ENCODE measurements at regions of chr3 and their contacts with region 1.

Region 1: GRCh38 chr3:62188681-62189383 is 184.5 kb downstream of the FEZF2 start:
- DNase-seq: peak; percentile 68 to 74
- ATAC-seq: peak; percentile 27 to 83 (median 72)
- H3K4me3 ChIP-seq: peak overlapping the region in 3 of 10 donors; percentile 12 to 39 (median 18)
- H3K27ac ChIP-seq: peak overlapping the region in 1 of 10 donors; percentile 10
- H3K4me1 ChIP-seq: peaks cover 0 to 27% (median 21%) of the 10 kb centered on the region in 9 donors
- H3K27me3 ChIP-seq: no peaks in the 10 kb centered on the region
- CTCF ChIP-seq: peak; percentile 60 to 88 (median 83)

Region 2: DNA sequence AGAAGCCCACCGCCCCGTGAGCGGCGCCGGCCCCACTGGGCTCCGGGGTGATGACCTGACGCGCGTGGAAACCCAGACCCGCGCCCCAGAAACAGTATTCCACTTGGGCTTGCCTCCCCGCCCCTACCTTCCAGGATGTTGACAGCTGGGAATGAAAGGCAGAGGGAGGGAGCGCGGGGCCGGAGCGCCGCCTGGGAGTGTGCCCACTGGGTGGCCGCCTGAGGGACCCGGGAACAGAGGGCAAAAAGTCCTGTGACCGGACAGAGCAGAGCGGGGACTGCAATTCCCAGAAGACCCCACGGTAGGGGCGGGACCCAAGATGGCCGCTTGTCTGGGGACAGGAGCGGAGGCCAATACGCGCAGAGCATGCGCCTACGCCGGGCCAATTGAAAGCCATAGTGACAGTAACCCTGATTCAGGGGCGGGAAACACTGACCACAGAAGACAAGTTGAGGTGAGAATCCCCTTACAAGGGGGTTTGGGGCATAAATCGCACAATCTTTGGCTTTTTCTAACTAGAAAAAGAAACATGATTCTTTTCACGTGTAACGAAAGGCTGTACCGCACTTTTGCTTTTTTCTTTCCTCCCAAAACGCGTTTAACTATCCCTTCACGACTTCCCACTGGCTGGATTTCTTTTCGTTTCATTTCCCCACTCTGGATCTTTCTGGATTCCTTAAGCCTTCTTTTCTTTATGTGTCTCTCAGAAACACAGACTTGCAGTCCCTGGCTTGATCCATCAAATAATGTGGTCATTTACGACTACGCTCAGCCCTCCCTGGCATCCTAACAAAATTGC is 937.5 kb before region 1 on chr3 and contains the start of gene FHIT:
- intact Hi-C with region 1: loop called in 1 of 10 experiments (anchors 10 kb)
- DNase-seq: peak; percentile 95
- ATAC-seq: peak; percentile 99
- H3K4me3 ChIP-seq: peak within 1 kb of the TSS; percentile 53 to 90 (median 74)
- H3K27ac ChIP-seq: peak within 1 kb of the TSS; percentile 53 to 93 (median 86)
- H3K4me1 ChIP-seq: peaks cover 0 to 30% (median 18%) of the 10 kb centered on the region in 9 donors
- H3K27me3 ChIP-seq: no peaks in the 10 kb centered on the region
- CTCF ChIP-seq: peak in 1 of 9 donors; percentile 19
- total RNA-seq, gene FHIT: 15.6 to 25.5 (median 19.3) TPM

Region 3: GRCh38 chr3:61858056-61858455 is 330.8 kb before region 1 on chr3:
- intact Hi-C with region 1: loop called (anchors 2 to 10 kb)
- DNase-seq: no peak
- ATAC-seq: peak in 6 of 8 donors; percentile 44 to 63 (median 59)
- H3K4me3 ChIP-seq: no peak overlapping the region
- H3K27ac ChIP-seq: peak overlapping the region in 1 of 10 donors; percentile 10
- H3K4me1 ChIP-seq: peaks cover 5 to 87% (median 46%) of the 10 kb centered on the region in 9 donors
- H3K27me3 ChIP-seq: no peaks in the 10 kb centered on the region
- CTCF ChIP-seq: peak; percentile 27 to 79 (median 58)

Region 4: DNA sequence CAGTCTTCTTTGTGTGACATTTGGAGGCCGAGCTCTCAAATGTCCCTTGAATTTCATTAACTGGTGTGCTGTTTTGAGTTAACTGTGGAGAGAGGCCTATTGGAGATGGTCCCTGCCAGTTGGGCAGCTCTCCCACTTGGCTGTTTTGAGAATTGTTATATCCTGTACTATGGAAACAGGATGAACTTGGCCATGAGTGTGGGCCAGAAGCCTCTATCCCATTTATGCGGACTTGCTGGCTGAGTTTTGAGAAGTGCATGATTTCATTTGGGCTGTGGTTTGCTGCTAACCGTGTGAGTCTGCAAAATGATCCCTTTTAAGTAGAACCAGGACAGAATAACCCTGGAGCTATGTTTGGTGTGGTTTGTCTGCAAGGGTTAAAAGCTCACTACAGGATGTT is 261.5 kb before region 1 on chr3:
- intact Hi-C with region 1: loop called in 3 of 10 experiments (anchors 5 to 10 kb)
- DNase-seq: peak; percentile 74 to 91
- ATAC-seq: peak; percentile 89 to 95 (median 91)
- H3K4me3 ChIP-seq: peak overlapping the region in 4 of 10 donors; percentile 0 to 28 (median 8)
- H3K27ac ChIP-seq: peak overlapping the region; percentile 51 to 81 (median 74)
- H3K4me1 ChIP-seq: peaks cover 22 to 73% (median 53%) of the 10 kb centered on the region in 9 donors
- H3K27me3 ChIP-seq: no peaks in the 10 kb centered on the region
- CTCF ChIP-seq: no peak

Region 5: DNA sequence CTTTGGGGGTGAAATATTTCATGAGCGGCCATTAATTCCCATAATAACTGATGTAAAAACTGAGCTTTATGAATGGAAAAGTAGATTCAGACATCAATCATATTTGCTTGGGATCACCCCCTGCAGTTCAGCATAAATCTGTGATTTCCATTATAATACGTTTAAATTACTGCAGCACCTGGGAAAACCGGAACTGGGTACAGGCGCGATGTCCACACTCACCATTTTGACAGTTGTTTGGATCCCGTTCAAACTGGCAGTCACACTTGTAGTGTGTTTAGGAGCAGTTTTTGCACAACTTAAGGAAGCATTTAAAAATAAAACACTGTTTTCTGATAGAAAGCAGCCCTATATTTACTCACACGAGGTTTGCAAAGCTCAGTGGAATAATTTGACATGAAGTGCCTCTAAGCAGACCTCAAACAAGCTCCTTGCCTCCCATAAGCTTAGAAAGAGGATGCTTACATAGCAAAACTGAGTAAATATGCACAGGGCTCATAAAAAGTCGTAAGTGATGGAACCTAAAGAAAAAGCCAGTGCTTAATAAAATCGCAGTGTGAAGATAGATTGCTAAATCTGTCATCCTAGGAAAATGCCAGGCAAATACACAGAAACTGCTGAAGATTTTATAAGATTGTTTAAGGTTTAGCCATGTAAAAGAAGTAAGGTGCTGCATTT is 249.8 kb before region 1 on chr3:
- intact Hi-C with region 1: no loop called
- DNase-seq: no peak
- ATAC-seq: peak in 1 of 8 donors; percentile 48
- H3K4me3 ChIP-seq: no peak overlapping the region
- H3K27ac ChIP-seq: no peak overlapping the region
- H3K4me1 ChIP-seq: peaks cover 0 to 31% (median 4%) of the 10 kb centered on the region in 9 donors
- H3K27me3 ChIP-seq: no peaks in the 10 kb centered on the region
- CTCF ChIP-seq: no peak

Region 6: DNA sequence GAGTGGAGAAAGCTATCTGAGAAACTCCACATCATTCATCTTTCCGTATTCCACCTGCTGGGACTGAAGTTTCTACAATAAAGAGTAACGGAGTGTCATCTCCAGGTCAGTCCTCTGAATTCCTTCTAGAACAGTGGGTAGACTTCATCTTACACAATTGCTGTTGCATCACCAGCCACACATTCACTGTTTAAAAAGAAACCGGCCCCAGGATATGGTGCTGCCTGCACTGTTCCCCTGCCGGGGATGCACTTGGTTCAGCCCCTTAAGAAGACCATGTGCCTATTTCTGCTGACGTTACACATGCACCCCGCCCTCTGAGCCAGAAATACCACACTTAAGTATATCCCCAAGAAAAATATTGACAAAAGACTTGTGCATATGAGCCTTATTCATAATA is 48.9 kb before region 1 on chr3:
- intact Hi-C with region 1: loop called in 3 of 10 experiments (anchors 5 kb)
- DNase-seq: no peak
- ATAC-seq: peak in 1 of 8 donors; percentile 23
- H3K4me3 ChIP-seq: no peak overlapping the region
- H3K27ac ChIP-seq: no peak overlapping the region
- H3K4me1 ChIP-seq: peaks cover under 1 to 39% (median 10%) of the 10 kb centered on the region in 9 donors
- H3K27me3 ChIP-seq: no peaks in the 10 kb centered on the region
- CTCF ChIP-seq: no peak

Region 7: GRCh38 chr3:62277450-62277849 is 88.6 kb after region 1 on chr3:
- intact Hi-C with region 1: no loop called
- DNase-seq: no peak
- ATAC-seq: no peak
- H3K4me3 ChIP-seq: no peak overlapping the region
- H3K27ac ChIP-seq: no peak overlapping the region
- H3K4me1 ChIP-seq: no peaks in the 10 kb centered on the region
- H3K27me3 ChIP-seq: no peaks in the 10 kb centered on the region
- CTCF ChIP-seq: no peak

Region 8: DNA sequence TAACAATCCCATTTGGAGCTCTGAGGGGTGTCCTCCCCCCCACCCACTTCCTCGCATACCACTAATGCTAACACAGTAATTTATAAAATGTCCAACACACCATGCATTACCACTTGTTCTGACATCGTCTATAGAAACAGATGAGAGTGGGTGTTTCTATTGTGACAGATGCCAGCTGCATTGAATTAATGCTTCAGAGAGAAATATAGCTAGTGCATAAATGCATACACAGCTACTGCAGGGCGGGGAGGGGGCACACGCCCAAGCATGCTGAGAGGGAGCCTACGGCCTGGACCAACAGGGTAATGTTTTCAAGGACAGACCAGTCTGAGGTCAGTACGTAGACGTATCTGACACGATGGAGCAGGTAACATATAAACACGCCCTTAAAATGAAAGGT is 290.5 kb after region 1 on chr3:
- intact Hi-C with region 1: no loop called
- DNase-seq: no peak
- ATAC-seq: no peak
- H3K4me3 ChIP-seq: no peak overlapping the region
- H3K27ac ChIP-seq: no peak overlapping the region
- H3K4me1 ChIP-seq: no peaks in the 10 kb centered on the region
- H3K27me3 ChIP-seq: peaks cover 0 to 5% (median 0%) of the 10 kb centered on the region in 7 donors
- CTCF ChIP-seq: no peak

Measured in heart right ventricle (tissue), 16 donors.